Activated CD4-positive, alpha-beta memory T cell treated with anti-CD3 and anti-CD28 coated beads for 36 hours (primary cell): ENCODE measurements at regions of chr4 and their contacts with region 1.

Region 1: DNA sequence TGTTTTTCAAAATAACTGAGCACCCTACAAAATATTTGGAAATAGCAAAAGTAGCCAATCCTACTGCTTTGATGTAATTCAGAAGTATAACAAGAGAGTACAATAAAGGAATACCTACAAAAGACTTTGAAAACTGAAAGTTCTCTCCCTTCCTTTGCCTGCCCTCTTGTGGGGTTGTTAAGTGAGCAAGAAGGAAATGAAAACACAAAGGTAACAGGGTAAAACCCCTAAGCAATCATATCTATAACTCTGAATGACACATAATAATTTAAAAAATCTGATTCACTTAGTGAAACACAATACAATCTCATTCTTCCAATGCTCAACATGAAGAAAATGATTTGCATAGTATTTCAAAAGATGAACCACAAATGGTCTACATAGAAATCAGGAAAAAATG is 98.2 kb downstream of the FRYL start:
- DNase-seq: no peak
- H3K4me3 Mint-ChIP-seq: no peak overlapping the region
- H3K27ac Mint-ChIP-seq: peak overlapping the region; percentile 39
- H3K4me1 Mint-ChIP-seq: peaks cover 36% of the 10 kb centered on the region
- H3K27me3 Mint-ChIP-seq: no peaks in the 10 kb centered on the region

Region 2: DNA sequence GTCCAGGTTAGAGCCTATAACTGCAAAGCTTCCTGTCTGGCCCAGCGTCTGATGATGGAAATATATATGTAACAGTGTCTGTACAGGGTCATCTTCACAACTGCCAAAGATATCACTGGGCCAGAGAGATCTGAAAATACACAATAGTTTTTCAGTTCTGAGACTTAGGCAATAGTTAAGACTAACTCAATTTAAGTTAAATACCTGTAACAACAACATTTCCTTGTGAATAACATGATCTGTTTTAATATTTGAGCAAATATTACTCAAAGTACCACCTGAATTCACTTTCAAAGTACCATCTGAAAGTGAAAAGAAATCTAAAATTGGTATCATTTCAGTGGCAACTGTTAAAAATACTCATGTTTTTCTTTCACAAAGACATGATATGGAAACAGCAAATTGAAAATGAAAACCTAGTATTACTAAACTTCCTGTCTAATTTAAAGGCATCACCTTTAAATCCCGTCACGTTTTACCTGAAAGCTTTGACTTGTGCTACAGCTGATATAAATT is 182.2 kb before region 1 on chr4:
- CTCF ChIA-PET with region 1: no interaction called
- POLR2A ChIA-PET with region 1: no interaction called
- intact Hi-C with region 1: loop called (anchors 5 kb)
- DNase-seq: no peak
- H3K4me3 Mint-ChIP-seq: no peak overlapping the region
- H3K27ac Mint-ChIP-seq: no peak overlapping the region
- H3K4me1 Mint-ChIP-seq: peaks cover 15% of the 10 kb centered on the region
- H3K27me3 Mint-ChIP-seq: no peaks in the 10 kb centered on the region

Region 3: DNA sequence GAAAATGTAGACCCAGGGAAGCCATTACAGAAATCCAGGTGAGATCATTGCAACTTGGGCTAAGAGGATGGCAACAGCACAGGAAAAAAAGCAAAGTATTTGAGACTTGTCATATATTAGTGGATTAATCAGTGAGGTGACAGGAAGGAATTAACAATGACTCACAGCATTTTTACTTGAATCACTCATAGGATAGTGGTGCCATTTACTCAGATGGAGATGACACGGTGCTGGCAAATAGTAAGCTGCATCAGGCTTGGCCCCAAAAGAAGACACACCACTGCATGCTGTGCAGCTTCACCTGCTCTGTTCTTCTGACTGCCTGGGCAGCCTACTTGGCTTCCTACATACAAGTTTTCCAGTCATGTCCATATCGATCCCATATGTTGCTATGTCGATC is 46.5 kb before region 1 on chr4:
- CTCF ChIA-PET with region 1: no interaction called
- POLR2A ChIA-PET with region 1: no interaction called
- intact Hi-C with region 1: loop called (anchors 5 kb)
- DNase-seq: peak; percentile 46
- H3K4me3 Mint-ChIP-seq: no peak overlapping the region
- H3K27ac Mint-ChIP-seq: no peak overlapping the region
- H3K4me1 Mint-ChIP-seq: peaks cover 19% of the 10 kb centered on the region
- H3K27me3 Mint-ChIP-seq: no peaks in the 10 kb centered on the region

Region 4: GRCh38 chr4:48727666-48728459 is 46.0 kb after region 1 on chr4:
- CTCF ChIA-PET with region 1: no interaction called
- POLR2A ChIA-PET with region 1: no interaction called
- intact Hi-C with region 1: loop called (anchors 5 kb)
- DNase-seq: no peak
- H3K4me3 Mint-ChIP-seq: no peak overlapping the region
- H3K27ac Mint-ChIP-seq: no peak overlapping the region
- H3K4me1 Mint-ChIP-seq: peaks cover 88% of the 10 kb centered on the region
- H3K27me3 Mint-ChIP-seq: no peaks in the 10 kb centered on the region

Region 5: DNA sequence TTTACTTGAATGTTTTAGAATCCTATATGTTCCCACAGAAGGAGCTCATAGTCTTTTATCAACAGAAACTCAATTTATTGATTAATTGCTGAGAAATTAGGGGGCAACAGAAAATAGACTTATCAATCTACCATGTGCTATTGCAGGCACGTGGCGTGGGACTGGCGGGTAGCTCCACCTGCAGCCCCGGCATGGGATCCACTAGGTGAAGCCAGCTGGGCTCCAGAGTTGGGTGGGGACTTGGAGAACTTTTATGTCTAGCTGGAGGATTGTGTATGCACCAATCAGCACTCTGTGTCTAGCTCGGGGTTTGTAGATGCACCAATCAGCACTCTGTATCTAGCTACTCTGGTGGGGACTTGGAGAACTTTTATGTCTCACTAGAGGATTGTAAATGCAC is 145.8 kb after region 1 on chr4:
- CTCF ChIA-PET with region 1: no interaction called
- POLR2A ChIA-PET with region 1: no interaction called
- intact Hi-C with region 1: no loop called
- DNase-seq: no peak
- H3K4me3 Mint-ChIP-seq: no peak overlapping the region
- H3K27ac Mint-ChIP-seq: no peak overlapping the region
- H3K4me1 Mint-ChIP-seq: peaks cover 15% of the 10 kb centered on the region
- H3K27me3 Mint-ChIP-seq: peaks cover 2% of the 10 kb centered on the region

Region 6: DNA sequence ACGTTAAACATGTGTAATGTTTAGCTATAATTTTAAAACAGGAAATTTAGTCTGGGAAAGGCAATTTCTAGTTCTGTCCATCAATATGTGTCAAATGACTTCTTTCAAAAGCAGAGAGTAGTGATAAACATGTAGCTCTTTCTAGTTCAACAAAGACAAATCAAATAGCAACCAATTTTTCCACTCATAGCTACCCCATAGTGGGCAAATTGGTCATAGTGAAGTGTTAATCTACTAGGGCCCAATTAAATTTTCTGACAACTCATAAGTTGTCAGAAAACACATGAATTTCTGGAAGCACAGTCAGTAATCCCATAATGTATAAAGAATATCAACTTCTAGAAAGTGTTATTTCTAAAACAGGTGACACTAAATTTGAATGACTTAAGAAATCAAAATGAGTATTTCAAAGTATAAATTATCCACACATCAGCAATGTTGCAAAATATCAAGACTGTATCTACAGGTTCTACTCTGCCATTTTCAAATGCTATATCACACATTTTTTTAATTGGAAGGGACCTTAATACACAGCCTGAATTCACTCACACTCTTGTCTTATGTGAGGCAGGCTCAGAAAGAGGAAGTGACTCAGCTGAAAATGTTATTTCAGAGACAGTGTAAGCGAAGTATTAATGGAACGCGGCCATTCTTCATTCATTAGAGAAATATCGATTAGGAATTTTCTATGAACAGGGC is 217.0 kb after region 1 on chr4:
- CTCF ChIA-PET with region 1: no interaction called
- POLR2A ChIA-PET with region 1: no interaction called
- intact Hi-C with region 1: loop called (anchors 2 kb)
- DNase-seq: no peak
- H3K4me3 Mint-ChIP-seq: no peak overlapping the region
- H3K27ac Mint-ChIP-seq: peak overlapping the region; percentile 52
- H3K4me1 Mint-ChIP-seq: peaks cover 24% of the 10 kb centered on the region
- H3K27me3 Mint-ChIP-seq: no peaks in the 10 kb centered on the region